GM12878 (cell line): ENCODE measurements at regions of chr1 and their contacts with region 1.

Region 1: GRCh38 chr1:112674439-112674985 is at the start of gene MOV10:
- DNase-seq: peak; percentile 40
- ATAC-seq: peak; percentile 81
- H3K4me3 ChIP-seq: peak within 1 kb of the TSS; percentile 86
- H3K27ac ChIP-seq: peak within 1 kb of the TSS; percentile 81
- H3K4me1 ChIP-seq: peaks cover 9% of the 10 kb centered on the region
- H3K27me3 ChIP-seq: no peaks in the 10 kb centered on the region
- CTCF ChIP-seq: no peak
- EP300 ChIP-seq: 0 out of 4 replicates have a peak, but pooled peaks of 1 of the 2 experiments have one; percentile 16
- POLR2A ChIP-seq: peak; percentile 74
- RAD21 ChIP-seq: no peak
- polyA plus RNA-seq, gene MOV10: 21.0 to 28.6 TPM

Region 2: DNA sequence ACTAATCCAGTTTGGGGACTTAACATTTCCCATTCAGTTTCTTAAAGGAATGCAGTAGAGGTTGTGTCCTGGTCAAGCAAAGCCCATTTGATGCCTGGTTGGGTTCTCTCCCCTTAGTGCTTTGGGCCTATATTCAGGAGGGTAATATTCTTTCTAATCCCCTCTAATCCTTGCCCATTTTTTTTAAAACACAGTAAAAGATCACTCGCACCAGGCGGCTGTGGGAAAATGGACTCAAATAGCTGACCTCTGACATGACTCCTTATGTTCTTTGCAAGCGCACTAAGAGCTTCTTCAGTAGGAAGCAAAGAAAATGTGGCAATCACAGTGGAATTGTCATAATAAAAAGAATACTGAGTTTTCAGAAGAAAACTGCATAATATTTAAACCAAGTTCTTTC is 115.9 kb before region 1 on chr1:
- CTCF ChIA-PET with region 1: no interaction called
- POLR2A ChIA-PET with region 1: no interaction called
- RAD21 ChIA-PET with region 1: no interaction called
- SMC1A ChIA-PET with region 1: no interaction called
- in situ Hi-C with region 1: no loop called
- intact Hi-C with region 1: no loop called
- DNase-seq: no peak
- ATAC-seq: no peak
- H3K4me3 ChIP-seq: no peak overlapping the region
- H3K27ac ChIP-seq: no peak overlapping the region
- H3K4me1 ChIP-seq: no peaks in the 10 kb centered on the region
- H3K27me3 ChIP-seq: no peaks in the 10 kb centered on the region
- CTCF ChIP-seq: no peak
- EP300 ChIP-seq: no peak
- POLR2A ChIP-seq: no peak
- RAD21 ChIP-seq: no peak

Region 3: DNA sequence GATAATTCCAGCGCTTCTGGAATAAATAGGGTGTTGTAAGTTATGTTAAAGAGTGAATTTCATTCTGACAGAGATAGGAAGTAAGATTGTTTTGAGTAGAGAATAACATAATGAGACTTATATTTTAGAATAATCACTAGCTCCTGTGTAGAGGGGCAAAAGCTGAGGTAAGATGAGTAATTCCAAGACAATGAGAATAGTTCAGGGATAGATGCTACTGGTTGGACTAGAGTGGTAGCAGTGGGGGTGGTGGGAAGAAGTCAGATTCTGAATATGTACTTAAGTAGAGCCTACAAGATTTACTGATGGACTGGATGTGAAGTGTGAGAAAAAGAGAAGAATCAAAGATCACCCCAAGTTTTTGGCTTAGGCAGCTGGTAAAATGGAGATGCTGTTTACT is 23.3 kb before region 1 on chr1:
- CTCF ChIA-PET with region 1: interaction called, 5 read pairs
- POLR2A ChIA-PET with region 1: interaction called, 3 read pairs
- RAD21 ChIA-PET with region 1: interaction called, 3 read pairs
- SMC1A ChIA-PET with region 1: interaction called, 11 read pairs
- in situ Hi-C with region 1: no loop called
- intact Hi-C with region 1: no loop called
- DNase-seq: no peak
- ATAC-seq: no peak
- H3K4me3 ChIP-seq: no peak overlapping the region
- H3K27ac ChIP-seq: no peak overlapping the region
- H3K4me1 ChIP-seq: no peaks in the 10 kb centered on the region
- H3K27me3 ChIP-seq: no peaks in the 10 kb centered on the region
- CTCF ChIP-seq: no peak
- EP300 ChIP-seq: no peak
- POLR2A ChIP-seq: no peak
- RAD21 ChIP-seq: no peak

Region 4: DNA sequence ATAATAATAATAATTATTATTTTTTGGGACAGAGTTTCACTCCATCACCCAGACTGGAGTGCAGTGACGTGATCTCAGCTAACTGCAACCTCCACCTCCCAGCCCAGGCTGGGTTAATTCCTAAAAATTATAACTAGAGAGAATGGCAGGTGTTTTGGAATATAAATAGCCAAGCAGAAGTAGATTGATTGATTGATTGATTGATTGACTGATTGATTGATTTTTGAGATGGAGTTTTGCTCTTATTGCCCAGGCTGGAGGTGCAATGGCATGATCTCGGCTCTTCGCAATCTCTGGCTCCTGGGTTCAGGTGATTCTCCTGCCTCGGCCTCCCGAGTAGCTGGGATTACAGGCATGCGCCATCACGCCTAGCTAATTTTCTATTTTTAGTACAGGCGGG is 14.4 kb before region 1 on chr1:
- CTCF ChIA-PET with region 1: interaction called, 12 read pairs
- POLR2A ChIA-PET with region 1: interaction called, 5 read pairs
- RAD21 ChIA-PET with region 1: interaction called, 3 read pairs
- SMC1A ChIA-PET with region 1: interaction called, 16 read pairs
- in situ Hi-C with region 1: no loop called
- intact Hi-C with region 1: no loop called
- DNase-seq: no peak
- ATAC-seq: no peak
- H3K4me3 ChIP-seq: no peak overlapping the region
- H3K27ac ChIP-seq: no peak overlapping the region
- H3K4me1 ChIP-seq: no peaks in the 10 kb centered on the region
- H3K27me3 ChIP-seq: no peaks in the 10 kb centered on the region
- CTCF ChIP-seq: no peak
- EP300 ChIP-seq: no peak
- POLR2A ChIP-seq: no peak
- RAD21 ChIP-seq: no peak